HepG2 (cell line): ENCODE measurements at regions of chr10 and their contacts with region 1.

Region 1: GRCh38 chr10:84205049-84205852 is 10.9 kb downstream of the CDHR1 start:
- DNase-seq: peak; percentile 38
- ATAC-seq: peak; percentile 79
- H3K4me3 ChIP-seq: no peak overlapping the region
- H3K27ac ChIP-seq: no peak overlapping the region
- H3K4me1 ChIP-seq: no peaks in the 10 kb centered on the region
- H3K27me3 ChIP-seq: peaks cover 1 to 17% of the 10 kb centered on the region in 2 experiments; a peak in 3 of 5 replicates
- CTCF ChIP-seq: peak; percentile 85
- EP300 ChIP-seq: no peak
- POLR2A ChIP-seq: no peak
- RAD21 ChIP-seq: peak; percentile 67

Region 2: DNA sequence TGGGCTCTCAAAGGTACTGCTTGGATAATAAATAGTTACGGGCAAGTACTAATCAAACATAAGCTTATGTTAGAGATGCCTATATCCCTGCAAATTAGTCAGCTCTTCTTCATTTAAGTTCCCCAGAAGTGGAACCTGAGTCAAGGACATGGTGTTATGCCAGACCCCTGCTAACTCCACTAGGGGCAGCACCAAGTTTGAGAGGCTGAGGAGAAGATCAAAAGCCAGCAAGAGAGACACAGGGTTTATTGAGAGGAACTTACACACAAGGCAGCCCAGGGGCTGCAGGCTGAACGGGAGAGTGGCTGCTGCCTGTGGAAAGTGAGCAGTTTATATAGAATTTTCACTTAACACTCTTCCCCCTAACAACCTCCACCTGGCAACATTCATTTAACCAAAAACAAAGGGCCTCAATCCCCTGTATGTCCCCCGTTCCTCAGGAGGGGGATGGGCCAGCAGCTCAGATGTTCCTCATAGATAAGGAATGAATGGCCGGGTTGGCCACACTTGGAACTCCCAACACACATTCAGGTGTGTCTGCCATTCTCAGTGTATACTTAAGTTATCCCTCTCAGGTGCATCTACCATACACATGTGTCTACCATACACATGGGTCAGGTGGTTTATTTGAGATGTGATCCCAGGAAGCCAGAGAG is 128.6 kb before region 1 on chr10:
- CTCF ChIA-PET with region 1: no interaction called
- POLR2A ChIA-PET with region 1: no interaction called
- in situ Hi-C with region 1: no loop called
- intact Hi-C with region 1: loop called (anchors 1 kb)
- DNase-seq: peak; percentile 19
- ATAC-seq: peak; percentile 89
- H3K4me3 ChIP-seq: no peak overlapping the region
- H3K27ac ChIP-seq: no peak overlapping the region
- H3K4me1 ChIP-seq: no peaks in the 10 kb centered on the region
- H3K27me3 ChIP-seq: no peaks in the 10 kb centered on the region; a peak in 1 of 5 replicates
- CTCF ChIP-seq: no peak
- EP300 ChIP-seq: no peak
- POLR2A ChIP-seq: no peak
- RAD21 ChIP-seq: no peak

Region 3: GRCh38 chr10:84126785-84127167 is 78.5 kb before region 1 on chr10:
- CTCF ChIA-PET with region 1: interaction called, 22 read pairs
- POLR2A ChIA-PET with region 1: no interaction called
- in situ Hi-C with region 1: loop called (anchors 5 kb)
- intact Hi-C with region 1: loop called (anchors 1 kb)
- DNase-seq: no peak
- ATAC-seq: no peak
- H3K4me3 ChIP-seq: no peak overlapping the region
- H3K27ac ChIP-seq: no peak overlapping the region
- H3K4me1 ChIP-seq: no peaks in the 10 kb centered on the region
- H3K27me3 ChIP-seq: peaks cover 0 to 5% of the 10 kb centered on the region in 2 experiments; a peak in 1 of 5 replicates
- CTCF ChIP-seq: no peak
- EP300 ChIP-seq: no peak
- POLR2A ChIP-seq: no peak
- RAD21 ChIP-seq: no peak

Region 4: DNA sequence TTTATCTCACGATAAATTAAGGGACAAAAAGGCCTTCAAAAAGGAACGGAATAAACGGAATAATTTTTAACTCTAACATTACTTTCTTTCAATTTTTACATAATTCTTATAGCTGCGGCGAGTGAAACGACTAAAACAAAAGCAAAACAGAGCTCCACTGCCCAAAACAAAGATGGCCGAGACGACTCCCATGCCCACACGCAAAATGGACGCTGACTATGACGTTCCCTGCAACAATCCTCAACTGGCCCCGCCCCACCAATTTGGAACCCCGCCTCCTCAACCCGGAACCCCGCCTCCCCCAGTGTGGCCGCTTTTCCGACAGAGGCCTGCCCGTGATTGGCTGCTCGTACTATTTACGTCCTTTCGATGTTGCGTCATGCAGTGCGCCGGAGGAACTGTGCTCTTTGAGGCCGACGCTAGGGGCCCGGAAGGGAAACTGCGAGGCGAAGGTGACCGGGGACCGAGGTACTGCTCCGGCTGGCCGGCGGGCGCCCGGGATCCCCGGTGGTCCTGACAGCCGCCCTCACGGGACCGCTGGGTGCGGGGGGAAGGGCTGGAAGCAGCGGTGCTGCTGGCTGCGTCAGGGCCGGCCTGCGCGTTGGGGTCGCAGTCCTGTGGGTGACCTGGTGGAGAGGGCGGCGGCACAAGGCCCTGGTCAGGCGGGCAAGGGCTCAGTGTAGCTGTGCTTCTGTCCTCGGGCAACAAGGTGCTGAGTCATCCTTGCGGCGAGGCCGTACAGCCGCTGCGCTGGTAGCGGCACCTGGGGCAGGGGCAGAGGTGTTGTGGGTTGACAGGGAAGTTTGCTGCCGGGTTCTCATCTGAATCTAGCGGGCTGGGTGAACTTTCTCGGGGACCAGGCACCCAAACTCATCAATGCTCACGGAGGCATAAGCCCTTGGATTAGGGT is 65.9 kb before region 1 on chr10 and contains the start of gene GHITM:
- CTCF ChIA-PET with region 1: no interaction called
- POLR2A ChIA-PET with region 1: no interaction called
- in situ Hi-C with region 1: loop called (anchors 5 kb)
- intact Hi-C with region 1: no loop called
- DNase-seq: peak; percentile 96
- ATAC-seq: peak; percentile 93
- H3K4me3 ChIP-seq: peak within 1 kb of the TSS; percentile 77 to 96 (median 87)
- H3K27ac ChIP-seq: peak within 1 kb of the TSS; percentile 85
- H3K4me1 ChIP-seq: peaks cover 38% of the 10 kb centered on the region
- H3K27me3 ChIP-seq: no peaks in the 10 kb centered on the region; a peak in 1 of 5 replicates
- CTCF ChIP-seq: peak; percentile 37; the same call in 1 of the 2 replicates
- EP300 ChIP-seq: 0 out of 4 replicates have a peak, but pooled peaks of 1 of the 2 experiments have one; percentile 41
- POLR2A ChIP-seq: peak; percentile 79 to 84
- RAD21 ChIP-seq: peak; percentile 49; the same call in 1 of the 2 replicates
- total RNA-seq, gene GHITM: 212 and 345 TPM in 2 replicates

Region 5: GRCh38 chr10:84224411-84225028 is 19.3 kb after region 1 on chr10:
- CTCF ChIA-PET with region 1: no interaction called
- POLR2A ChIA-PET with region 1: no interaction called
- in situ Hi-C with region 1: no loop called
- intact Hi-C with region 1: no loop called
- DNase-seq: no peak
- ATAC-seq: no peak
- H3K4me3 ChIP-seq: no peak overlapping the region
- H3K27ac ChIP-seq: no peak overlapping the region
- H3K4me1 ChIP-seq: no peaks in the 10 kb centered on the region
- H3K27me3 ChIP-seq: no peaks in the 10 kb centered on the region
- CTCF ChIP-seq: no peak
- EP300 ChIP-seq: no peak
- POLR2A ChIP-seq: no peak
- RAD21 ChIP-seq: no peak

Region 6: DNA sequence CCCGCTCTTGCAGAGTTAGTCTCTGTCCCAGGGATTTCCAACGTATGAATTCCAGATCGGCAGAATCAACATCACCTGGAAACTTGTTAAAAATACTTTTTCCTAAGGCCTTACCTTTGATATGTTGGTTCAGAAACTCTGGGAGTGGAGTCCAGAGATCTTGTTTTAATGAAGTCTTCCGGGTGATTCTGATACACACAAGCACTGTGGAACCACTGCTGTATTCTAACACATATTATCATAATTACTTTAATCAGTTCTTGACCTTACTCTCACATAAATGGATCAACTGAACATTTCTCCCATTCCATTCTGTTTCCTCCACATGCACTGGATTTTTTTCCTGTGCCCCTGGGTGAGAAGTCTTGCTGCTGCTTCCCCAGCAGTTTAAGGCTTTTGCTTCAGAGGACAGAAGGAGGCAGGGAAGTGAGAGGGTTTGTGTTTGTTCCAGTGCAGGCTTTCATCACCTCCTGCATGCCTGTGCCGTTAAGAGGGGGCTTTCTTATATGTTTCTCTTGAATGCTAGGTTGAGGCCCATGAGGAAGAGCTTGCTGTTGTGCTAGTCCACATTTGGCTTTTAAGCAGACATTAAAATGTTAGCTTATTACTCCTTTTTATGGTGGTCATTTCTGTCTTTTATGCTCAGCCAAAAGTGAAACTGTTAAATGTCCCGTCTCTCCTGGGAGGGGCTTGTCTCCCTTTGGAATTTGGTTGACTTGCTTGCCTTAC is 155.6 kb after region 1 on chr10:
- CTCF ChIA-PET with region 1: no interaction called
- POLR2A ChIA-PET with region 1: no interaction called
- in situ Hi-C with region 1: no loop called
- intact Hi-C with region 1: no loop called
- DNase-seq: no peak
- ATAC-seq: peak; percentile 60
- H3K4me3 ChIP-seq: peak overlapping the region; percentile 3 to 49 (median 9); a peak in 4 of 6 replicates
- H3K27ac ChIP-seq: no peak overlapping the region
- H3K4me1 ChIP-seq: peaks cover 56% of the 10 kb centered on the region
- H3K27me3 ChIP-seq: no peaks in the 10 kb centered on the region
- CTCF ChIP-seq: no peak
- EP300 ChIP-seq: no peak
- POLR2A ChIP-seq: no peak
- RAD21 ChIP-seq: no peak

Region 7: GRCh38 chr10:84548869-84549268 is 343.6 kb after region 1 on chr10:
- CTCF ChIA-PET with region 1: no interaction called
- POLR2A ChIA-PET with region 1: no interaction called
- in situ Hi-C with region 1: no loop called
- intact Hi-C with region 1: no loop called
- DNase-seq: no peak
- ATAC-seq: peak; percentile 65
- H3K4me3 ChIP-seq: no peak overlapping the region
- H3K27ac ChIP-seq: no peak overlapping the region
- H3K4me1 ChIP-seq: no peaks in the 10 kb centered on the region
- H3K27me3 ChIP-seq: peaks cover 0 to 49% of the 10 kb centered on the region in 2 experiments; a peak in 4 of 5 replicates
- CTCF ChIP-seq: peak; percentile 38; the same call in 1 of the 2 replicates
- EP300 ChIP-seq: no peak
- POLR2A ChIP-seq: no peak
- RAD21 ChIP-seq: no peak